Activated CD4-positive, alpha-beta memory T cell treated with anti-CD3 and anti-CD28 coated beads for 36 hours (primary cell): ENCODE measurements at regions of chr11 and their contacts with region 1.

Region 1: DNA sequence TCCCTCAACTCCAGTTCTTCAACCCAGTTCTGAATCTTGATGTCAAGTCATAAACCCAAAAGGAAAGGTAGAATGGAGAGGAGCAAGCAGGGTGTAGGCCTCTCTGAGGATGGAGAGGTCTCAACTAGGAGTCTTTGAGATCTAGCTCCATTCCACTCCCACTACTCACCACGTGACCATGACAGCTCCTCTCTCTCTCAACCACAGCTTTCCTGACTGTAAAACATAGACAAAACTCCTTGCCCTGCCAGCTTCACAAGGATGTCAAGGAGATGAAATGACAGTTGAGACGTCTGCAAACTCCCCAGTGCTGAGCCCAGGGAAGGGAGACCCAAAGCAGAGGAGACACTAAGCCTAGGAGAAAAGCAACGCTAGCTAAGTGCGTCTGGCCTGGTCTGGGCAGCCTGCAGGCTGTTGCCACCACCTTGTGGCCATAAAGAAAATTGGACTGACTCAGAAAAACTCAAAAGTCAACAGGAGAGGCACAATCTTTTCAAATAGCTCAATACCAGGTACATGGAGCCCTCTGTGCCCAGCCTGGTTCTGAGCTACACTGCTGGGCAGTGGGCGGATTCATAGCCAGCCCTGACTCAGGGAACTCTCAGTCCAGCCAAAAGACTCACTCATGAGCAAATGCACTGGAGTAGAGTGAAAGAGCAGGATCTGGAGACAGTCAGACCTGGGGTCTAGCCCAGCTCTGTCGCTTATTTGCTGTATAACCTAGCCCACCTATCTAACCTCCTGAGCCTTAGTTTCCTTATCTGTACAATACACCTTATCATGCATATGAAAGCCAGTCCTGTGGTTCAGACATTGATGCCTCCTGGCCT is 3.4 kb downstream of the CLPB start:
- DNase-seq: peak; percentile 51
- H3K4me3 Mint-ChIP-seq: no peak overlapping the region
- H3K27ac Mint-ChIP-seq: no peak overlapping the region
- H3K4me1 Mint-ChIP-seq: peaks cover 30% of the 10 kb centered on the region
- H3K27me3 Mint-ChIP-seq: no peaks in the 10 kb centered on the region

Region 2: DNA sequence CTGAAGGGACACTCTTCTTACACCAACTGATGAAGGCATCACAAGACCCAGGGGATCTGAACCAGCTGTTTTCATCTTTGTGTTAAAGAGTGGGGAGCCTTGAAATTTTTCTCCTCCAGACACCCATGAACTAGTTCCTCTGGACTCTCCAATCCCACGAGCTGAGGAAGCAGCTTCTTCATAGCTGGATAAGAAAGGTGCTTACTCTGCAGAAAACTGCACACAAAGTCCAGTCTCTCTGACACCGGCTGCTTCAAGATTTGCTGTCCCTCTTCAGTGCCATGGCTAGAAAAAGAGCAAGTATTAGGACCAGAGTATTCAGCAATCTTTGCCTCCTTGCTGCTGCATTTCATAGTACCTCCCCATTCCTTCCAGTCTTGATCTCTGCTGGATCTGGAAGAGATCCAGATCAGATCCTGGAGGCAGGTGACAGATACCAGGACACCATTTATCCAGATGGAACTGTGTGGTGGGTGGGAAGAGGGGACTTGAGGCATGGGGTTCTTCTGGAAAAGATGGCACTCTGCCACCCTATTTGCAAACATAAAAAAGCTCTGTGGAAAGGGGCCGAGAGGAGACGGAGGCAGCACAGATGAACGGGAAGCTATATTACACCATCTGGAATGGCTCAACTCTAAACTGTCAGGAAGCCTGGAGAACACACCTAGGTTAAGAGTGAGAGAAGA is 406.7 kb before region 1 on chr11:
- CTCF ChIA-PET with region 1: interaction called, 16 read pairs
- POLR2A ChIA-PET with region 1: no interaction called
- intact Hi-C with region 1: no loop called
- DNase-seq: no peak
- H3K4me3 Mint-ChIP-seq: no peak overlapping the region
- H3K27ac Mint-ChIP-seq: peak overlapping the region; percentile 2
- H3K4me1 Mint-ChIP-seq: peaks cover 24% of the 10 kb centered on the region
- H3K27me3 Mint-ChIP-seq: no peaks in the 10 kb centered on the region

Region 3: GRCh38 chr11:72222907-72223614 is 207.9 kb before region 1 on chr11:
- CTCF ChIA-PET with region 1: interaction called, 7 read pairs
- POLR2A ChIA-PET with region 1: interaction called, 3 read pairs
- intact Hi-C with region 1: loop called (anchors 2 kb)
- DNase-seq: peak; percentile 95
- H3K4me3 Mint-ChIP-seq: peak overlapping the region; percentile 75
- H3K27ac Mint-ChIP-seq: peak overlapping the region; percentile 77
- H3K4me1 Mint-ChIP-seq: peaks cover 24% of the 10 kb centered on the region
- H3K27me3 Mint-ChIP-seq: peaks cover 5% of the 10 kb centered on the region

Region 4: DNA sequence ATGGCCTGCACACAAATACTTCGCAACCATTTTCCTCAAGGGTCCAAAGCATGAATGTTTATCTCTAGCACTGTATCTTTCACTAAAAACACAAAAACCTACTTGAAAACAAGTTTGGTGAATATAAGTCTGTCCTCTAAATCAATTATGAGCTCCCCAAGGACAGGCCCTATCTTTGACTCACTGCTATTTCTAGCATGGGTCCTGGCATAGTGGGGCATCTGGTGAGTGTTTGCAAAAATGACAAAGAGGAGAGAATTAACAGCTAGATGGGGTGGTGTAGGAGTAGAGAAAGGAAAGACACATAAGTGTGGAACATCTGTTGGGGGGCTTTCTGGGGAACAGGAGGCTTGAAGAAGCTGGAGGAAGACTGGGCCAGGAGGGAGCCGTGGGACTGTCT is 113.0 kb before region 1 on chr11:
- CTCF ChIA-PET with region 1: interaction called, 13 read pairs
- POLR2A ChIA-PET with region 1: no interaction called
- intact Hi-C with region 1: no loop called
- DNase-seq: no peak
- H3K4me3 Mint-ChIP-seq: no peak overlapping the region
- H3K27ac Mint-ChIP-seq: no peak overlapping the region
- H3K4me1 Mint-ChIP-seq: peaks cover 2% of the 10 kb centered on the region
- H3K27me3 Mint-ChIP-seq: no peaks in the 10 kb centered on the region

Region 5: GRCh38 chr11:72446902-72447769 is 16.2 kb after region 1 on chr11:
- CTCF ChIA-PET with region 1: interaction called, 66 read pairs
- POLR2A ChIA-PET with region 1: no interaction called
- intact Hi-C with region 1: no loop called
- DNase-seq: no peak
- H3K4me3 Mint-ChIP-seq: no peak overlapping the region
- H3K27ac Mint-ChIP-seq: no peak overlapping the region
- H3K4me1 Mint-ChIP-seq: no peaks in the 10 kb centered on the region
- H3K27me3 Mint-ChIP-seq: peaks cover 8% of the 10 kb centered on the region